ENCODE measurements at regions of chr6 and their contacts with region 1.

Region 1: DNA sequence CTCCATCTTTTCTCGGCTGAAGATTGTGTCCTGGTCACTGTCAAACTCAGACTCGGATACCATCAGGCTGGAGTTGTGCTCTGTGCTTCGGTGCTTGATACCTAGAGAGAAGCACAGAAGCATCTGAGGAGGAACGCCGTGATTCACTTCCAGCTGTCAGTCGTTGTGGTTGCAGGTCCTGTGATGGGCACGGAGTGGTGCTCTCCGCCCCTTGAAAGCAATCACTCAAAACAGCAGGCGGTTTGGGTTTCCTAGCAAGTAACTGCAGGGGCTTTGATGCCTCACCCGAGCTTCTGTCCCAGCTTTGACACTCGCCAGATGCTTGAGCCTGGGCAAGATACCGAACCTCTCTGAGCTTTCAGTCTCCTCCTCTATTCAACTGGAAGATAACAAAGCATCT is 52.5 kb downstream of the ALDH5A1 start:
- DNase-seq: no peak
- ATAC-seq: peak; percentile 24; the same call in 1 of the 2 replicates
- H3K4me3 ChIP-seq: no peak overlapping the region
- H3K27ac ChIP-seq: no peak overlapping the region
- H3K4me1 ChIP-seq: no peaks in the 10 kb centered on the region
- H3K27me3 ChIP-seq: no peaks in the 10 kb centered on the region
- CTCF ChIP-seq: no peak

Region 2: GRCh38 chr6:23797041-23797440 is 750.2 kb before region 1 on chr6:
- CTCF ChIA-PET with region 1: no interaction called
- POLR2A ChIA-PET with region 1: no interaction called
- intact Hi-C with region 1: no loop called
- DNase-seq: no peak
- ATAC-seq: no peak
- H3K4me3 ChIP-seq: no peak overlapping the region
- H3K27ac ChIP-seq: no peak overlapping the region
- H3K4me1 ChIP-seq: no peaks in the 10 kb centered on the region
- H3K27me3 ChIP-seq: peaks cover 11% of the 10 kb centered on the region
- CTCF ChIP-seq: no peak

Region 3: DNA sequence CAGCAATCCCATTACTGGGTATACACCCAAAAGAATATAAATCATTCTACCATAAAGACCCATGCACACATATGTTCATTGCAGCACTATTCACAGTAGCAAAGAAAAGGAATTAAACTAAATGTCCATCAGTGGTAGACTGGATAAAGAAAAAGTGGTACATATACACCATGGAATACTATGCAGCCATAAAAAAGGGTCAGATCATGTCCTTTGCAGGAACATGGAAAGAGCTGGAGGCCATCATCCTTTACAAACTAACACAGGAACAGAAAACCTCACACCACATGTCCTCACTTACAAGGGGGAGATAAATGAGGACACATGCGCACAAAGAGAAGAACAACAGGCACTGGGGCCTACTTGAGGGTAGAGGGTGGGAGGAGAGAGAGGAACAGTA is 250.3 kb before region 1 on chr6:
- CTCF ChIA-PET with region 1: no interaction called
- POLR2A ChIA-PET with region 1: no interaction called
- intact Hi-C with region 1: no loop called
- DNase-seq: no peak
- ATAC-seq: no peak
- H3K4me3 ChIP-seq: no peak overlapping the region
- H3K27ac ChIP-seq: no peak overlapping the region
- H3K4me1 ChIP-seq: no peaks in the 10 kb centered on the region
- H3K27me3 ChIP-seq: no peaks in the 10 kb centered on the region
- CTCF ChIP-seq: no peak

Region 4: DNA sequence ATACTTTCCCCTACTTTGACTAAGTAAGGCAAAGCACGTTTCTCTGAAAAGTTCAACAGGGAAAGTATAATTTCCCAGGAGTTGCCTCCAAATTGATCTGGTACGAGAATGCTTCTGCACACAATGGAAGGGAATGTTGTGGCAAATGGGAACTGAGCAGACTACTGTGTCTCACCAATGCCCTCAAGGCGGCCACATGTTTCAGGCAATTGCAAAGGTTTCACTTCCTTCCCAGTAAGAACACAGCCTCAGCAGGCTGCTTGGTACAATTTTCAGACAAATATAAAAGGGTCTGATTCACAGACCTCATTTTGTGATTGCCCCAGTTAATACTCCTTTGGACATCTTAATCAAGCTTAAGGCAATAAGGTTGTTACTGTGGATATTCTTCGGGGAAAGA is 27.6 kb after region 1 on chr6:
- CTCF ChIA-PET with region 1: no interaction called
- POLR2A ChIA-PET with region 1: interaction called, 11 read pairs
- intact Hi-C with region 1: no loop called
- DNase-seq: peak; percentile 13
- ATAC-seq: no peak; the same call in 1 of the 2 replicates
- H3K4me3 ChIP-seq: no peak overlapping the region
- H3K27ac ChIP-seq: no peak overlapping the region
- H3K4me1 ChIP-seq: no peaks in the 10 kb centered on the region
- H3K27me3 ChIP-seq: no peaks in the 10 kb centered on the region
- CTCF ChIP-seq: no peak

Region 5: GRCh38 chr6:24630856-24631505 is 83.7 kb after region 1 on chr6:
- CTCF ChIA-PET with region 1: no interaction called
- POLR2A ChIA-PET with region 1: interaction called, 11 read pairs
- intact Hi-C with region 1: no loop called
- DNase-seq: no peak
- ATAC-seq: no peak
- H3K4me3 ChIP-seq: no peak overlapping the region
- H3K27ac ChIP-seq: no peak overlapping the region
- H3K4me1 ChIP-seq: no peaks in the 10 kb centered on the region
- H3K27me3 ChIP-seq: no peaks in the 10 kb centered on the region
- CTCF ChIP-seq: no peak

Measured in PC-3 (cell line).